Heart left ventricle (tissue), 16 donors: ENCODE measurements at regions of chr12 and their contacts with region 1.

Region 1: DNA sequence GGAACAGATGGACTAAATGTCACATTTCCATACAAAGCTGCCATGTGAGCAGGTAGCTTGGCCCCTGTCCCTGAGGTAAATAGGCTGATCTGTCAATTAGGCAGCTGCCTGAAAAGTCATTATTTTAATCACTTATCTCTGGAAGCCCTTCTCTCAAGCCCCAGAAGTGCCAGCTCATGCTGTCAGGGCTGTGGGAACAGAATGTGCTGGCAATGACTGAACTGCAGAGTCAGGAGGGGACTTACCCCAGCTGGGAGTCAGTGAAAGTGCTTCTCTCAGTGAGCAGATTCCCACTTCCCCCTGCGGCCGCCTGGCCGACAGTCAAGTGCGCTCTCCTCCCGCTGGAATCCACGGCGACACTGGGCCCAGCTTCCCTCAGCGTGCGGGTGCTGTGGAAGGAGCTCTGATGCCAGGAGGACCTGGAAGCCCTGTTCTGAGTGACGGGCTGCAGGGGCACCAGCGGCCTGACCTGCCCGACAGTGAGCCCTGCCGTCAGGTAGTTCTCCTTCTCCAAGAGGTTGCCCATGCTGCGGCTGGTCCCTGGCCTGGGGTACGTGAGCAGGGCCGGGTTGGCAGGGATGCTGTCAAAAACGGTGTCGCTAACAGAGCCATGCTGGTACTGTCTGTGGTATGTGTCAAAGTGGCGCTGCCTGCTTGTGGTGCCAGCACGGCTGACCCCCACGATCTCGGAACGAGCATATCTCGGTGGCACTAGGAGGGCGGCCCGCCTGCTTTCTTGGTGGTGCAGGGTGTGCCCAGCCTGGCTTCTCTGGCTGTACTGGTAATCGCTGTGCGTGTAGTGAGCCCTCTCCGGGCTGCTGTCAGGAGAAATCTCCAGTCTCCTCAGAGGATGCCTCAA is 18.7 kb downstream of the PKP2 start:
- DNase-seq: peak; percentile 82 to 90 (median 87)
- ATAC-seq: peak; percentile 88 to 94 (median 92)
- H3K4me3 ChIP-seq: peak overlapping the region in 8 of 12 donors; percentile 5 to 50 (median 26)
- H3K27ac ChIP-seq: peak overlapping the region; percentile 68 to 97 (median 86)
- H3K4me1 ChIP-seq: peaks cover 0 to 77% (median 16%) of the 10 kb centered on the region in 12 donors
- H3K27me3 ChIP-seq: no peaks in the 10 kb centered on the region
- CTCF ChIP-seq: no peak
- POLR2A ChIP-seq: peak in 1 of 2 donors; percentile 58

Region 2: GRCh38 chr12:31736472-31736871 is 1141.4 kb before region 1 on chr12:
- intact Hi-C with region 1: no loop called
- DNase-seq: no peak
- ATAC-seq: no peak
- H3K4me3 ChIP-seq: no peak overlapping the region
- H3K27ac ChIP-seq: peak overlapping the region in 1 of 12 donors; percentile 4
- H3K4me1 ChIP-seq: peaks cover 0 to 61% (median 17%) of the 10 kb centered on the region in 12 donors
- H3K27me3 ChIP-seq: no peaks in the 10 kb centered on the region
- CTCF ChIP-seq: no peak
- POLR2A ChIP-seq: no peak

Region 3: DNA sequence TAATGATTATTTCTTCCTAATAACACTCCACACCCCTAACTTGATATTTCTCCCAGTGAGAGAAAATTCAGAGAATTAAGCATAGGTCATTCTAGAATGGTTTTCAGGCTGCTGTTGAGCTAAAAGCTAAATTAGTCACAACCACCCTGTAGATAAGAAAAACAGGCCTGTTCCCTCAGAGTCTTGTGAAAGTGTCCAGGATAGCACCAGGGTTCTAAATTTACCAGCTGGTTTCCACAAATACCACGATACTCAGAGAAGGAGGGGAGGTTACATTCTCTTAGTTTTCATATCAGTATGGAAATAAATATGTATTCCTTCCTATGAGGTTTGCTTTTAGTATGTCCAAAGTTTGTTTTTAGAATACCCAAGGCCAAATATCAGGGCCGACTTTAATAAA is 56.1 kb before region 1 on chr12:
- intact Hi-C with region 1: loop called in 6 of 10 experiments (anchors 2 to 5 kb)
- DNase-seq: no peak
- ATAC-seq: peak; percentile 86 to 88 (median 87)
- H3K4me3 ChIP-seq: peak overlapping the region in 4 of 12 donors; percentile 21 to 47 (median 40)
- H3K27ac ChIP-seq: peak overlapping the region; percentile 58 to 96 (median 81)
- H3K4me1 ChIP-seq: peaks cover 0 to 47% (median 14%) of the 10 kb centered on the region in 12 donors
- H3K27me3 ChIP-seq: no peaks in the 10 kb centered on the region
- CTCF ChIP-seq: no peak
- POLR2A ChIP-seq: no peak

Region 4: DNA sequence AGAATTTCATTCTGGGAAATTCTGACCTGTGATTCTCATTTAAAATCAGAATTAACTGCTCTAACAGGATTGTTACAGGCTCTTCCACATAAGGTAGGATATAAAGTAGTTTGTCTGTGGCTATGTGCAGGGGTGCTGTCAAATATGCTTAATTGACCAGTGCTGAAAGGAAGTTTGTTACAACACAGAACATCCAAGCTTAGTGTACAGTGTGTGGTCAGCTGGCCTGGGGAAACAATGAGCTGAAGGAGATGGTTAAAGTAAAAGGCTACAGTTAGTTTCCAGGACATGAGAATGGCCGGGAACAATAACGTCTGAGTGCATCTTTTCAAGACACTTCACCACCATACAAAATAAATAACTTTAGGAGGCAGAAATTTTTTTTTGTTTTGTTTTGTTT is 49.3 kb before region 1 on chr12:
- intact Hi-C with region 1: loop called in 5 of 10 experiments (anchors 5 kb)
- DNase-seq: no peak
- ATAC-seq: peak; percentile 8 to 40 (median 26)
- H3K4me3 ChIP-seq: no peak overlapping the region
- H3K27ac ChIP-seq: peak overlapping the region; percentile 38 to 96 (median 73)
- H3K4me1 ChIP-seq: peaks cover 0 to 45% (median 6%) of the 10 kb centered on the region in 12 donors
- H3K27me3 ChIP-seq: no peaks in the 10 kb centered on the region
- CTCF ChIP-seq: no peak
- POLR2A ChIP-seq: no peak

Region 5: DNA sequence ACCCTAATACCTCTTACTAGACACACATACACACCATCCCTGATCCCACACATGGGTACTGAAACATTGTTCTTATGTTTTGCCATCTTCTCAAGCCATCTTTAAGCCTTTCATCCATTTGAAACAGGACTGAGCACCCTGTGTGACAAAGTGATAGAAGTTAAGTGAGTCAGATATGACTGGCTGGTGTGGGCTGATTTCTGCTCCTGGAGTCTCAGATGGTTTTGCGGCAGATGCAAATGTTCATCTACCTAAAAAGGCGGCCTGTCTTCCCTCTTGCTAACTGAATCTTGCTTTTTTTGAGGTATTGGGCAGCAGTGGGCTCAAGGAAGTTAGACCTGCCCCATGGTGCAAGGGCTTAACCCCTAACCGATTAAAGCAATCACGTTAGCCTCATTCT is 49.1 kb after region 1 on chr12:
- intact Hi-C with region 1: no loop called
- DNase-seq: no peak
- ATAC-seq: no peak
- H3K4me3 ChIP-seq: no peak overlapping the region
- H3K27ac ChIP-seq: no peak overlapping the region
- H3K4me1 ChIP-seq: no peaks in the 10 kb centered on the region
- H3K27me3 ChIP-seq: no peaks in the 10 kb centered on the region
- CTCF ChIP-seq: no peak
- POLR2A ChIP-seq: no peak